Dorsolateral prefrontal cortex (tissue), 120 donors: ENCODE measurements at regions of chr3 and their contacts with region 1.

Region 1: GRCh38 chr3:84958495-84959469 is at the start of gene CADM2:
- DNase-seq: peak; percentile 93 to 97 (median 95)
- H3K4me3 ChIP-seq: peak within 1 kb of the TSS; percentile 58 to 95 (median 83)
- H3K27ac ChIP-seq: peak within 1 kb of the TSS; percentile 67 to 96 (median 91)
- H3K27me3 ChIP-seq: peaks cover 0 to 2% (median 0%) of the 10 kb centered on the region in 45 donors
- CTCF ChIP-seq: peak in 54 of 56 donors; percentile 44 to 79 (median 64)
- total RNA-seq, gene CADM2: 182 to 362 (median 287) TPM

Region 2: DNA sequence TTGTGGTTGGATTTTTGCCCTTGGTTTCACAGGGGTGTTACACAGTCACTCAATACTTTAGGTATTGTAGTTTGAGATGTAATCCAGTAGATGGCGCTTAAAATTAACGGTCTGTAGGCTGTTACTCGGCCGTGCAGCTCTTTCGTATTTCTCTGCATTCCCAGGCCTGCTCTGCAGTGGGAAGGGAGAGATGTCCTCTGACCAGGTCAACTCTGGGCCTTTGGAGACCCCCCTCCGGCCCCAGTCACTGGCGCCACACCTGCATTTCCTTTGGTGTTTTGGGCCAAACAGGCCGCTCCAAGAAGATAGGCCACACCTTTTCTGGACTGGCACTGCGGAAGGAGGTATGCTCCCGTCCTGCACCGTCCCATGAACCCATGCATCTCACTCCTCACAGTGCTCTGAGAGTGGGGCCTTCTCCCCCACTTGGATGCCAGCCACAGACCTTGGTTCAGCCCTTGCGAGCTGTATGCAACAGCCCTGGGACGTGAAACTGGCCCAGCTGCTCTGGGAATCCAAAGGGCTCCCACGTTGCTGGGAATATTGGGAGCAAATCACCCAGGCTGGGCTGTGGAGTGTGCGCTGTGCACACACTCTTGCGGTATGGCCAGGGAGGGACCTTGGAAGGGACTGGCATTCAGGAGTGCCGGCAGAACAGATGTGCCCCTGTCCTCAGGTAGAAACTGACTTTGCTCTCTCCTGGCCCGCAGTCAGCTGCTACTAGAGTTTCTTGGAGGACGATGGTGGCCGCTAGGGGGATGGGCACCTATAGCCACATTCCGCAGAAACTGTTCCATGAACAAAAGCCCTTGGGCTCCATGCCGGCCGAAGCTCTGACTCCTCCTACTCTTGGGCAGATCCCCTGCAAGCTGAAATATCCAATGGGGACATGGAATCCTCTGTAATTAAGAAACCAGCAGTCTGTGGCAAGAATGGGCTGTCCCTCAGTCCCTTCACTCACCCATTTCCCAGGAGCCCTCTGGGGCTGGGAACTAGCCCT is 410.5 kb before region 1 on chr3:
- intact Hi-C with region 1: loop called (anchors 5 to 10 kb)
- DNase-seq: peak in 2 of 10 donors; percentile 3 to 43
- H3K4me3 ChIP-seq: peak overlapping the region in 4 of 59 donors; percentile 11 to 28 (median 17)
- H3K27ac ChIP-seq: no peak overlapping the region
- H3K27me3 ChIP-seq: no peaks in the 10 kb centered on the region
- CTCF ChIP-seq: peak in 55 of 56 donors; percentile 16 to 81 (median 63)

Region 3: DNA sequence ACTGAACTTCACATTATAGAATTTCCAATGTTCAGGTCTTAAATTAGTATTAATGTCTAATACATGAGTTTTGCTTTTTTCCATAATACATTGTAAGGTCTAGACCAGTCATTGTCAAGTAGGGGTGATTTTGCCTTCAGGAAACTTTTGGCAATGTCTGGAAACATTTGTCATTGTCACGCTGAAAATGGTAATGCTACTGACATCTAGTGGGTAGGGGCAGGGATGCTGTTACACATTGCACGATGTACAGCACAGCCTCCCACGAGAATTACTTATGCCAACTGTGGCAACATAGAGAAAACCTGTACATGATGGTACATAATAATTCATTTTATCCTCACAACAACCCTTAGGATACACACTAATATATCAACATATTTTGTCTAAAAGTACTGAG is 384.1 kb after region 1 on chr3:
- intact Hi-C with region 1: loop called in 1 of 2 experiments (anchors 5 kb)
- DNase-seq: peak in 3 of 10 donors; percentile 20 to 61 (median 40)
- H3K4me3 ChIP-seq: peak overlapping the region in 1 of 59 donors; percentile 14
- H3K27ac ChIP-seq: peak overlapping the region in 19 of 59 donors; percentile 1 to 41 (median 29)
- H3K27me3 ChIP-seq: no peaks in the 10 kb centered on the region
- CTCF ChIP-seq: peak in 54 of 56 donors; percentile 26 to 84 (median 62)

Region 4: DNA sequence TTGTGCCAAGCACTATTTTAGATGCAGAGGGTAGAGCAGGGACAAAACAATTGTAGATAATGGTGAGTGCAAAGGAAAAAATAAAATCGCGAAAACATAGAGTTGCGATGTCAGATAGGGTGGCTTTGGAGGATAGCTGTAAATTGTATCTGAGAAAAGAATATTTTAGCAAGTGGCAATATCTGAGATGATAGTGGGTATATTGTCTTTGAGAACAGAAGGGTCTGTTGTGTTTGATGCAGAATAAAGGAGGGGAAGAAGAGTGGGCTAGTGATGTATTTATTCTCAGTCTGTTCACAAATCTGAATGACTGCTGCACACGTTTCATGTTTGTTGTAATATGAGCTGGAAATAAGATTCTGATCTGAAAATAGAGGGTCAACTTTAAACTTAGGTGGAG is 396.8 kb after region 1 on chr3:
- intact Hi-C with region 1: loop called in 1 of 2 experiments (anchors 5 kb)
- DNase-seq: no peak
- H3K4me3 ChIP-seq: peak overlapping the region in 47 of 59 donors; percentile 2 to 60 (median 37)
- H3K27ac ChIP-seq: peak overlapping the region in 57 of 59 donors; percentile 7 to 88 (median 73)
- H3K27me3 ChIP-seq: no peaks in the 10 kb centered on the region
- CTCF ChIP-seq: peak in 2 of 56 donors; percentile 9 to 25

Region 5: DNA sequence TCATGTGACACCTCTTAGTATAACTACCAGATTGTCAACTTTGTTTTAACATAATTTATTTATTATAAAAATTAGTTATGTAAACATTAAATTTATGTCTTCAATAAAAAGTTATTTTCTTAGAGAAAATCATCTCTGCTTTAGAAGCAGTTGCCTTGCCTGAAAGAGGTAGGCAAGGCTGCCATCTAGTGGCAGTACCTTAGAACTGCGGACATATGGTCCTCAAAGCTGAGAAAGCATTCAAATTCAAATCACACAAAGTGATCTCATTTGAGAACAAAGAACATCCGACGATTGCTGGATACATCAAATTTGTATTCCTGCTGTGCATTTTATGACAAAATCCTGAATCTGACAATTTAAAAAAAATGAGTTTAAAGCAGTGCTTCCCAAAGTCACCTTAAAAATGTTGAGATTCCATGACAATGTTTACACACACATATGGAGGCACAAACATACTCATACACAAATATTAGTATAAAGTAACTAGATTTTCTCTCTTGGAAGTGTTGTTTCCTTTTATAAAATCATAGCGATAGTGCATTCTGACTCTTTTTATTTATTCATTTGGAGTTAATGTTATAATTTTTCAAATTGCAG is 617.4 kb after region 1 on chr3:
- intact Hi-C with region 1: loop called in 1 of 2 experiments (anchors 5 kb)
- DNase-seq: peak; percentile 58 to 93 (median 80)
- H3K4me3 ChIP-seq: peak overlapping the region in 40 of 59 donors; percentile 1 to 55 (median 28)
- H3K27ac ChIP-seq: peak overlapping the region; percentile 0 to 94 (median 81)
- H3K27me3 ChIP-seq: no peaks in the 10 kb centered on the region
- CTCF ChIP-seq: peak; percentile 80 to 98 (median 92)